AG04450 (cell line): ENCODE measurements at regions of chr9 and their contacts with region 1.

Region 1: GRCh38 chr9:33374634-33375213 is 27.6 kb downstream of the AQP7 start:
- DNase-seq: peak; percentile 47
- H3K4me3 ChIP-seq: no peak overlapping the region
- H3K27ac ChIP-seq: no peak overlapping the region
- H3K27me3 ChIP-seq: no peaks in the 10 kb centered on the region
- CTCF ChIP-seq: peak; percentile 96

Region 2: DNA sequence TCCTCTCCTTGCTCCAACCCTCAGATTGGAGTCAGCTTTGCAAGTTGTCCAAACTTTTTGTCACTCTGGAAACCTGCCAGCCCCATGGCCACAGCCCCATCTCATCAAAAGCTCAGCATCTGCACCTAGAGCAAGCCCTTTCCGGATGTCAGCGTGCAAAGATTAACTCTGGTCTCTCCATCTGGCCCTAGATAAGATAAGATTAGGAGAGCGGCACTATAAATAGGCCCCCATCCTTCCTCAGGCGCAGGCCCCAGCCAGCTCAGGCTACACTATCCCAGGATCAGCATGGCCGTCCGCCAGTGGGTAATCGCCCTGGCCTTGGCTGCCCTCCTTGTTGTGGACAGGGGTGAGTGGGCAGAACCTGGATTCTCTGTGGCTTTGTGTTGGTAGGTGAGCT is 134.8 kb before region 1 on chr9 and contains the start of gene SPINK4:
- CTCF ChIA-PET with region 1: no interaction called
- POLR2A ChIA-PET with region 1: no interaction called
- DNase-seq: no peak
- H3K4me3 ChIP-seq: no peak within 1 kb of the TSS
- H3K27ac ChIP-seq: no peak within 1 kb of the TSS
- H3K27me3 ChIP-seq: no peaks in the 10 kb centered on the region
- CTCF ChIP-seq: no peak
- polyA plus RNA-seq, gene SPINK4: not detected in 2 replicates

Region 3: DNA sequence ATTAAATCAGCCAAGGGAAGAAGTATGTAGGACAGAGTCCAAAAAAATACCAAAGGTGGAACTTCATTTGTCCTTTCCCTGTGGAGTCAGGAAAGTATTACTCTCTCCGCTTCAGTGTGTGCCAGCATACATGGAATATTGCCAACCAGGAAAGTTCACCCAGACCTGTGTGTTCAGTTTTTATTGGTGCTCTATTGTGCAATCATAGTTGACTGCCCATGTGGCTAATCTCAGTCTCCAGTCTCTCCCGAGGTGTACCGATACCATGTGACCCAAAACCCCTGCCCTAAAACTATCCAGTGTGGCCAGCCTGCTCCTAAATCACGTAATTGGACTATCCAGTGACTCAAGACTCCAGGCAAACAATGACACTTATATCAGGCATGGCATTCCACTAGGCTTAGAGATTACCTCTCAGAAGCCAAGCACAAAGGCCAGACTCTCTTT is 45.6 kb before region 1 on chr9:
- CTCF ChIA-PET with region 1: interaction called, 27 read pairs
- POLR2A ChIA-PET with region 1: no interaction called
- DNase-seq: peak; percentile 57
- H3K4me3 ChIP-seq: no peak overlapping the region
- H3K27ac ChIP-seq: peak overlapping the region; percentile 84
- H3K27me3 ChIP-seq: no peaks in the 10 kb centered on the region
- CTCF ChIP-seq: no peak

Region 4: DNA sequence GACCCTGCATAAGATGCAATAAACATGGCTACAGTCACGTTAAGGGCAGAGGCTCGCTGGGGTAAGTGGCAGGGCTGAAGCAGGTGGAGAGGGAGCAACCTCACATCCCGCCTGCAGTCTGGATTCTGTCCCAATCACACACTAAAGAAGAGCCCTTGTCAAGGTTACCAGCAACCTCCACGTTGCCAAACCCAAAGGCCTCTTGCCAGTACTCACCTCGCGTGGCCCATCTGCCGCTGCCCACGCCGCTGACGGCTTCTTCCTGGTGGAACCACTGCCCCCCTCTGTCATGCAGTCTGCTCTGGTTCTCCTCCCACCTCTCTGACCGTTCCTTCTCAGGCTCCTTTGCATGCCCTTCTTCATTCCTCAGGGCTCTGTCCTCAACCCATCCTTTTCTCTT is 18.9 kb after region 1 on chr9:
- CTCF ChIA-PET with region 1: interaction called, 10 read pairs
- POLR2A ChIA-PET with region 1: no interaction called
- DNase-seq: no peak
- H3K4me3 ChIP-seq: no peak overlapping the region
- H3K27ac ChIP-seq: no peak overlapping the region
- H3K27me3 ChIP-seq: no peaks in the 10 kb centered on the region
- CTCF ChIP-seq: no peak

Region 5: GRCh38 chr9:33446946-33447798 is 72.4 kb after region 1 on chr9 and contains the start of gene AQP3:
- CTCF ChIA-PET with region 1: interaction called, 47 read pairs
- POLR2A ChIA-PET with region 1: no interaction called
- DNase-seq: peak; percentile 10
- H3K4me3 ChIP-seq: peak within 1 kb of the TSS; percentile 55
- H3K27ac ChIP-seq: no peak within 1 kb of the TSS
- H3K27me3 ChIP-seq: no peaks in the 10 kb centered on the region
- CTCF ChIP-seq: 0 out of 2 replicates have a peak, but pooled peaks have one; percentile 25
- polyA plus RNA-seq, gene AQP3: 10.6 and 12.4 TPM in 2 replicates

Region 6: DNA sequence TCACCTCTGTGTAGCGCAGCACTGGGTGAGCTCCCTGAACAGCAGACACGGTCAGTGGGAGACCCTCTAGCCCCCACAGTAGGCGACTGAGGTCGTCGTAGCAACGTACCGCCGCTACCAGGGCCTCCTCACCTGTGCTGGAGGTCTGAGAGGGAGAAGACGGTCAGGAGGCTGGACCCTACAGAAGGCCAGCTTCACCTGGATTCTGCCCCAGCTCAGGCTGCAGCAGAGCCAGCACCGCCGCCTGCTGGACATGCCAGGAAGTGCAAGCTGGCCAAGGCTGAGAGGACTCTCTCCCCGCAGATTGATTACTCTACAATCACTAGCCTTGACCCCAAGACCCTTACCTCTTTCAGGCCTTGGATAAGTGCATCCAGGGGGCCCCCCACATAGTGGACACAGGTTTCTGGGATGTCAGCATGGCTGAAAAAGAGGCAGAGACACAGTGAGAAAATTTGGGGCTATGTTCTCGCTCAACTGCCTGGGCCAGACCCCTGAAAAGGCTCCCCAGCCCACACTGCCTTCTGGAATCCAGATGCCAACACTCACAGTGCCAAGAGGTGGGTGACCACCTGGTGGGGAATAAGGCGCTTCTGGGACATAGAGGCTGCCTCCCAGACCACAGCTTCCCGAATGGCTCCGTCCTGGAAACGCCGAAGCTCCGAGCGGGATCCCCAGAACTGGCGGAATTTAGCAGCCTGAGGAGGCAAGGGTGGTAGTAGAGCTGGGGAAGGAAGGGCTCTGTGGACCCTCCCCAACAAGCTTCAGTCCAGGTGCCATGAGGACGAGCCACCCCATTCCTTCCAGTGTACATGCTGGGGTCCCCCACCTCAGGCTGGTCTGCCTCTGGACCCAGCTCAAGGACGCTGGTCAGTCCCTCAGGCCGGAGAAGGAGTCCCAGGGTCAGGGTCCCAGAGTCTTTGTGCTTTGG is 92.1 kb after region 1 on chr9:
- CTCF ChIA-PET with region 1: interaction called, 74 read pairs
- POLR2A ChIA-PET with region 1: interaction called, 3 read pairs
- DNase-seq: no peak
- H3K4me3 ChIP-seq: no peak overlapping the region
- H3K27ac ChIP-seq: no peak overlapping the region
- H3K27me3 ChIP-seq: no peaks in the 10 kb centered on the region
- CTCF ChIP-seq: peak; percentile 98

Region 7: DNA sequence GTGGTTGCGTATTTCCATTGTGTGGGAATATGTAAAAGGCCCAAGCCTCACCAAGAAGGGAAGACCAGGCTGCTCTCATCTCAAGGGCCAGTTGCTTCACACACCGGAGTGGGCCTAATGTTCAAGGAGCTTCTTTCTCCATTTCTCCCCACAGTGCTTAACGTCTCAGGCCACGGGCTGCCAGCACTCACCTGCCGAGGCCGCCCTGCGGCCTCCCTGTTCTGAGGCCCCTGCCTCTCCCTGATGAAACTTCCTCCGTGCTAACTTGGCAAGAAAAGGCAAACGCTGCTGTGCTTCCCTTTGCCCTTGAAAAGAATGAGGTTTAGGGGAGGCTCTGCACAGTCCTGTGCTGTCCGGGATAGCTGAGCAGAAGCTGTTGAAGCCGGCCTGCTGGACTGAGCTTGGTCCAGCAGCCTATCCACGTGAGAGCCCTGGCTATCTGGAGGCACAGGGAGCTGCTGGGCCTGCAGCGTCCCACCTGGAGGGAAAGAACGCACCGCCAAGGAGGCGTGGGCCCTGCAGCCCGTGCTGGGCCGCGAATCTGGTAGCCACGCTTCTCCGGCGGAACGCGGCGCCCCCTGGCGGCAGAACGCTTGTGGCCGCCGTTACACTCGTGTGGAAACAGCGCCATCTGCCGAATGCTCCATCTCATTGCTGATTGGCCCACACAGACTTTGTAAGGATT is 347.1 kb after region 1 on chr9:
- CTCF ChIA-PET with region 1: interaction called, 17 read pairs
- POLR2A ChIA-PET with region 1: no interaction called
- DNase-seq: peak; percentile 59
- H3K4me3 ChIP-seq: no peak overlapping the region
- H3K27ac ChIP-seq: no peak overlapping the region
- H3K27me3 ChIP-seq: peaks cover 9% of the 10 kb centered on the region
- CTCF ChIP-seq: peak; percentile 99